ENCODE measurements at regions of chr2 and their contacts with region 1.

Region 1: DNA sequence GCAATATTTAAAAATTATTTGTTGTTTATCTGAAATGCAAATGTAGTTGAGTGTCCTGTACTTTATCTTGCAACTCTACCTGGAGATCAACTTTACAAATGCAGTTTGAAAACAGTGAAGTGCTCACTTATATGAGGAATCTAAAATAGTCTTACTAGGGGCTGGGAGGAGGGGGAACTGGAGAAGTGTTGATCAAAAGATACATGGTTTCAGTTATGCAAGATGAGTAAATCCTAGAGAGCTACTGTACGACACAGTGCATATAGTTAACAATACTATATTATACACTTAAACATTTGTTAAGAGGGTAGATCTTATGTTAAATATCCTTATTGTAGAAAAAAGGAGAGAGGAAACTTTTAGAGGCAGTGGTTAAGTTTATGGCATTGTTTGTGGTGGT is 241.9 kb downstream of the BCL11A start:
- DNase-seq: no peak

Region 2: GRCh38 chr2:60278906-60279305 is 32.6 kb before region 1 on chr2:
- intact Hi-C with region 1: loop called (anchors 2 kb)
- DNase-seq: no peak

Region 3: DNA sequence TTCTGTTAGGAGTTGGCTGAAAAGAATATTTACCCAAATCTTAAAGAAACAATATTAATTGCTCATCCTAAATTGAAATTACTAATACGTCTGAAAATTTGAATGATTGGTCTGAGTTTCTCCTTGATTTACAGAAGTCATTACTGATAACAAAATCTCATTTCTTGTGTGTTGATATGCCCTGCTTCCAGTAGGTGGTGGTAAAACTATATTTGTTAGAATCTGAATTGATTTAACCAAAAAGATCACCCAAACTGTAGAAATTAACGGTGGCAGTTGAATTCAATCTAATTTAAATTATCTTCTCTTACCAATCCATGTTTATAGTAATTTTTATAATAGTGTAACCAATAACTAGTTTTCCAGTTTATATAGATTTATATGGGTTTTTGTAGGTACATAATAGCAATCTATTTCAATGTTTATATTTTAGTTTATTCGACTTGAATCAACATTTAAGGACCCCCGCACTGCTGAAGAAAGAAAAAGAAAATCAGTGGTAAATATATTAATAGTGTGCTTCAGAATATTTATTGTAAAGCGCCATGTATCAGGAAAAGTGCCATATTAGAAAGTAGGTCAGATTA is 482.8 kb after region 1 on chr2:
- intact Hi-C with region 1: no loop called
- DNase-seq: no peak

Measured in posterior cingulate gyrus (tissue), 11 donors.